Endothelial cell of umbilical vein (primary cell): ENCODE measurements at regions of chr22 and their contacts with region 1.

Region 1: DNA sequence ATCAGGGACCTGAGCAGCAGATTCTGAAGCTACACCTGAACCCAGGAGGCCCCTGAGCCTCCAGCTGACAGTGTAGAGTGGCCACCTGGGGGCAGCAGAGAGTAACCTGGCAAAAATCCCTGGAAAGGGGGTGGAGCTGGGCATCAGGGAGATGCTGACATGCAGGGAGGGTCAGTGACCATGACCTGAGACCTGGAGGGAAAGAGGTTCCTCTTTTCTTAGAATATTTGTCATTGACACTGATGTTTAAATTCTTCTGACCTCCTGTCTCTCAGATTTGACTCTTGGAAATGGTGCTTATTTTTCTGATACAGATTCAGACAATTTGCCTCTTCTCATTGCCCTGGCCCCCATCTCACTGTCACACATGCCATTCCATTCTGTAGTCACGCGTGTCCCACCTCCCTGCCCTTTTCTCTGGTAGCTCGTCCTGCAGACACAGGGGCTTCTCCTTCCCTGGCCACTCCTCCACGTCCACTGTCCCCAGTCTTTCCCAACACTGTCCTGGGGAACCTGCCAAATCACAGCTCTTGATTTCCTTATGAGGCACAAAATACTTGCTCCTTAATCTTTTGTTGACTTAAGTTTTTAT is 117.2 kb upstream of the IGLL5 start:
- DNase-seq: peak; percentile 48
- H3K4me3 ChIP-seq: no peak overlapping the region
- H3K27ac ChIP-seq: no peak overlapping the region
- H3K4me1 ChIP-seq: no peaks in the 10 kb centered on the region
- H3K27me3 ChIP-seq: peaks cover 2 to 5% of the 10 kb centered on the region in 2 experiments
- CTCF ChIP-seq: peak; percentile 76 to 78
- POLR2A ChIP-seq: no peak

Region 2: DNA sequence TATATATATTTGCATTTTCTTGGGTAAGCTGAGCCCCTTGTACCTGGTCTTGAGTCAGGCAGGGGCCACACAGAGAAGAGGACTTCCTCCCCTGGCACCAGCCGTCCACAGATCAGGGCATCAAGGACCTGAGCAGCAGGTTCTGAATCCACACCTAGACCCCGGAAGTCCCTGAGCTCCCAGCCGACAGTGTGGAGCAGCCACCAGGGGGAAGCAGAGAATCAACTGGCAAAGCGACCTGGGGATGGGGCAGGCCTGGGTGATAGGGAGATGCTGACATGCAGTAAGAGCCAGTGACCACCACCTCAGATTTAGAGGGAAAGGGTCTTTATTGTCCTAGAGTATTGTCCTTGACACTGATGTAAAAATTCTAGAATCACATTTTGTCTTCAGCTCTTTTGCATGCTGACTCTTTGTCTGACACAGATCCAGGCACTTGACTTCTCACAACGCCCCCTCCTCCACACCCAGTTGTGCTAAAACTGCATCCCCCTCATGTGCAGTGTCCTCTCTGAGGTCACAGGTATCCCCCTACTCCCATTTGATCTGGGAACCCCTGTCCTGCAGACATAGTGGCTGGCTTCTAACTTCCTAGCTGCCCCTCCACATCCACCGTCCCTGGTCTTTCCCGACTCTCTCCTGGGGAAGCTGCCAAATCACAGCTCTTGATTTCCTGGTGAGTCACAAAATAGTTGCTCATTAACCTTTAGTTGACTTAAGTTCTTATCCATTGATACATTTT is 16.7 kb before region 1 on chr22:
- CTCF ChIA-PET with region 1: interaction called, 23 read pairs
- POLR2A ChIA-PET with region 1: no interaction called
- dilution Hi-C with region 1: no loop called
- intact Hi-C with region 1: no loop called
- DNase-seq: peak; percentile 13
- H3K4me3 ChIP-seq: no peak overlapping the region
- H3K27ac ChIP-seq: no peak overlapping the region
- H3K4me1 ChIP-seq: no peaks in the 10 kb centered on the region
- H3K27me3 ChIP-seq: no peaks in the 10 kb centered on the region
- CTCF ChIP-seq: peak; percentile 55 to 64
- POLR2A ChIP-seq: no peak

Region 3: GRCh38 chr22:22787786-22788459 is 17.5 kb after region 1 on chr22:
- CTCF ChIA-PET with region 1: interaction called, 12 read pairs
- POLR2A ChIA-PET with region 1: no interaction called
- dilution Hi-C with region 1: no loop called
- intact Hi-C with region 1: no loop called
- DNase-seq: peak; percentile 34
- H3K4me3 ChIP-seq: no peak overlapping the region
- H3K27ac ChIP-seq: no peak overlapping the region
- H3K4me1 ChIP-seq: no peaks in the 10 kb centered on the region
- H3K27me3 ChIP-seq: peaks cover 0 to 5% of the 10 kb centered on the region in 2 experiments
- CTCF ChIP-seq: peak; percentile 80 to 91
- POLR2A ChIP-seq: no peak

Region 4: GRCh38 chr22:22810018-22810427 is 39.6 kb after region 1 on chr22:
- CTCF ChIA-PET with region 1: interaction called, 11 read pairs
- POLR2A ChIA-PET with region 1: no interaction called
- dilution Hi-C with region 1: no loop called
- intact Hi-C with region 1: no loop called
- DNase-seq: peak; percentile 7
- H3K4me3 ChIP-seq: no peak overlapping the region
- H3K27ac ChIP-seq: no peak overlapping the region
- H3K4me1 ChIP-seq: no peaks in the 10 kb centered on the region
- H3K27me3 ChIP-seq: peaks cover 8 to 16% of the 10 kb centered on the region in 2 experiments
- CTCF ChIP-seq: peak; percentile 80 to 82
- POLR2A ChIP-seq: no peak

Region 5: GRCh38 chr22:22877523-22878210 is 107.3 kb after region 1 on chr22:
- CTCF ChIA-PET with region 1: interaction called, 17 read pairs
- POLR2A ChIA-PET with region 1: no interaction called
- dilution Hi-C with region 1: no loop called
- intact Hi-C with region 1: no loop called
- DNase-seq: peak; percentile 40
- H3K4me3 ChIP-seq: no peak overlapping the region
- H3K27ac ChIP-seq: no peak overlapping the region
- H3K4me1 ChIP-seq: no peaks in the 10 kb centered on the region
- H3K27me3 ChIP-seq: no peaks in the 10 kb centered on the region
- CTCF ChIP-seq: peak; percentile 65 to 85
- POLR2A ChIP-seq: no peak